Sigmoid colon (tissue), 7 donors: ENCODE measurements at regions of chr1 and their contacts with region 1.

Region 1: GRCh38 chr1:25858906-25859789 is at the start of gene AUNIP:
- DNase-seq: peak; percentile 91
- H3K4me3 ChIP-seq: peak within 1 kb of the TSS; percentile 27 to 56 (median 50)
- H3K27ac ChIP-seq: peak within 1 kb of the TSS; percentile 71 to 78 (median 76)
- H3K4me1 ChIP-seq: peaks cover 0 to 17% (median 10%) of the 10 kb centered on the region in 4 donors
- H3K27me3 ChIP-seq: no peaks in the 10 kb centered on the region
- CTCF ChIP-seq: no peak
- EP300 ChIP-seq: no peak
- POLR2A ChIP-seq: peak; percentile 55 to 59
- total RNA-seq, gene AUNIP: not detected

Region 2: GRCh38 chr1:25895365-25895993 is 36.3 kb after region 1 on chr1:
- intact Hi-C with region 1: loop called (anchors 2 kb)
- DNase-seq: peak; percentile 95
- H3K4me3 ChIP-seq: peak overlapping the region in 2 of 4 donors; percentile 13 to 21
- H3K27ac ChIP-seq: peak overlapping the region in 2 of 4 donors; percentile 29 to 46
- H3K4me1 ChIP-seq: peaks cover 0 to 31% (median 27%) of the 10 kb centered on the region in 4 donors
- H3K27me3 ChIP-seq: no peaks in the 10 kb centered on the region
- CTCF ChIP-seq: peak; percentile 97 to 99 (median 99)
- EP300 ChIP-seq: no peak
- POLR2A ChIP-seq: no peak

Region 3: GRCh38 chr1:26874896-26875295 is 1015.7 kb after region 1 on chr1:
- intact Hi-C with region 1: no loop called
- DNase-seq: no peak
- H3K4me3 ChIP-seq: no peak overlapping the region
- H3K27ac ChIP-seq: no peak overlapping the region
- H3K4me1 ChIP-seq: peaks cover 0 to 4% (median 0%) of the 10 kb centered on the region in 4 donors
- H3K27me3 ChIP-seq: no peaks in the 10 kb centered on the region
- CTCF ChIP-seq: no peak
- EP300 ChIP-seq: no peak
- POLR2A ChIP-seq: no peak